ENCODE measurements at regions of chr9 and their contacts with region 1.

Region 1: DNA sequence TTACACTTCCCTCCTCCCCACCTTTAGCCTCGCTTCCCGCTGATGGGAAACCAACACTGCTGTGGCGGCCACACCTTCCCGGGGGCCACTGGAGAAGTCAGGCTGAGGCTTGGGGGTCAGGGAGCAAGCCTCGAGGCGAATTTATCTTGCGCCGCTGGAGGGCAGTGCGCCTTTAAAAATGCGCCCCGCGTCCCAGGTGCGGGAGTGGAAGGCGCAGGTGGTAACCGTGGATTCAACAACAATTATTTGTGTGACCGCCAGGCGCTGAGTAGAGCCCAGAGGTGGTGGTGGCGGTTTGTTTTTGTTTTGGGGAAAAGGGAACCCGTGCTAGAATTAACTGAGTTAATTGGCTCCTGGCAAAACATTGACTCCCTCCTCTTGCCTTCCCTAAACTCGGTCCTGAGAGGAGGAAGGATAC is 1.1 kb downstream of the CFAP77 start:
- DNase-seq: peak; percentile 67
- ATAC-seq: peak; percentile 53

Region 2: GRCh38 chr9:132575005-132575609 is 164.0 kb after region 1 on chr9:
- intact Hi-C with region 1: loop called (anchors 2 kb)
- DNase-seq: peak; percentile 75
- ATAC-seq: peak; percentile 91

Region 3: DNA sequence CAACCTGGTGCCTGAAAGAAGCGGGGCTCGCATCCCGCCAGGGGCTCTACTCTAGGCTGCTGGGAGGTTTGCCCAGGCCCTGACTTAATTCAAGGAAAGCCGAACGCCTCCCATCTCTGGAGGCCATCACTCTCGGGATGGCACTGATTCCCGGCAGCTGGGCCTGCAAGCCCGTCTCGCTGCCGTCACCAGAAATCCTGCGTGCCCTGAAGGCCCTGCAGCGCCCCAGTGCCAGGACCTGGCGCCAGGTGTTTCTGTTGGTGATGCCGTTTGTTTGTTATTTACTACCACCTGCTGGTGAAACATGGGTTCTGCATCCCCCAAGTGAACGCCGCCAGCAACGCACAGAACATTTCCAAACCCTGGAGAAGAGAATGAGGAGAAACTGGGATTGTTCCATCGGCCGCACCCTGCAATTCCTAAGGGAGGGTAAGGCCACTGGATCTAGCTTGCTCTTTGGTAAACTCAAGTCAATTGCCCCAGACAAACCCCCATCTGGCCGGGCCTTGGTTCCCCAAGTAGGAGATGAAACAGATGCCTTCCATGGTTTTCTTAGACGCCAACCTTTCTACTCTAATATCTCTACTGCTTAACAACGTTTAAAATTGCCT is 389.0 kb after region 1 on chr9:
- intact Hi-C with region 1: loop called (anchors 5 kb)
- DNase-seq: peak; percentile 90
- ATAC-seq: peak; percentile 86

Measured in Right ventricle myocardium superior (tissue), 1 donor.